AG04449 (cell line): ENCODE measurements at regions of chr6 and their contacts with region 1.

Region 1: DNA sequence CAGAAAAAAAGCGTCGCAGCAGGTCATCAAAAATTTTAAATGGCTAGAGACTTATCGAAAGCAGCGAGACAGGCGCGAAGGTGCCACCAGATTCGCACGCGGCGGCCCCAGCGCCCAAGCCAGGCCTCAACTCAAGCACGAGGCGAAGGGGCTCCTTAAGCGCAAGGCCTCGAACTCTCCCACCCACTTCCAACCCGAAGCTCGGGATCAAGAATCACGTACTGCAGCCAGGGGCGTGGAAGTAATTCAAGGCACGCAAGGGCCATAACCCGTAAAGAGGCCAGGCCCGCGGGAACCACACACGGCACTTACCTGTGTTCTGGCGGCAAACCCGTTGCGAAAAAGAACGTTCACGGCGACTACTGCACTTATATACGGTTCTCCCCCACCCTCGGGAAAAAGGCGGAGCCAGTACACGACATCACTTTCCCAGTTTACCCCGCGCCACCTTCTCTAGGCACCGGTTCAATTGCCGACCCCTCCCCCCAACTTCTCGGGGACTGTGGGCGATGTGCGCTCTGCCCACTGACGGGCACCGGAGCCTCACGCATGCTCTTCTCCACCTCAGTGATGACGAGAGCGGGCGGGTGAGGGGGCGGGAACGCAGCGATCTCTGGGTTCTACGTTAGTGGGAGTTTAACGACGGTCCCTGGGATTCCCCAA is at the start of gene EEF1A1:
- DNase-seq: peak; percentile 99
- H3K4me3 ChIP-seq: peak within 1 kb of the TSS; percentile 100
- CTCF ChIP-seq: peak; percentile 2

Region 2: DNA sequence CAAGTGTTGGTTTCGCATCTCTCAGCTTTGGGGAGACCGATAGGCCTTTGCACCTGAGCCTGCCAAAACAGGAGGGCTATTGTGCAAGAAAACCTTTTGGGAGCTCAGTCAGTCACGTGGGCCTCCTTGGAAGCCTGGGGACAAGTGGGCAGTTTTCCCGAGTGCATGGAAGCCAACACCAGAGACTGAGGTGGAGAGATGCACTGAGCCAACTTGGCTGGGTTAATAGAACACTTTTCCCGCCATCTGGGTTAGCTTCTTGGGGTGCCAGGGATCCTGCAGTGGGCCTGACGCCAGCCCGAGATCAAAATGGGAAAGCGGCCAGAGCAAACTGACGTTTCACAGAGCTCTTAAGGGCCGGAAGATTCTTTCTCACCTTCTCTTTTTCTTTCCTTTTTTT is 148.3 kb before region 1 on chr6:
- CTCF ChIA-PET with region 1: no interaction called
- POLR2A ChIA-PET with region 1: no interaction called
- DNase-seq: no peak
- H3K4me3 ChIP-seq: no peak overlapping the region
- CTCF ChIP-seq: no peak

Region 3: DNA sequence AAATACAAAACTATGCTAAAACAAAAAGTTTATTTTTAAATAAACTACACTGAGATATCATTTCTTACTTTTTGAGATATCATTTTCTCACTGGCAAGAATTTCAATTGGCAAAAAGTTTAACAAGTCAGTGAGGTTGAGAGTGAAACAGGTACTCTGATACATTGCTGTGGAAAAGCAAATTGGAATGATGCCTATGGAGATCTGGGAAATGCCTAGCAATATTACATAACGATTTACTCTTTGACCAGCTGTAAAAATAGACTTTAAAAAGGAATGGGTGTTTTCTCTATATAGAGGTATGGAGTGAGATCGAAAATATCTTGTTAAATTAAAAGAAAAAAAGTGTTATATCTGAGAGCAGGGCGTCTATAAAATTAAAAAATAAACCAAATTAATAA is 85.6 kb before region 1 on chr6:
- CTCF ChIA-PET with region 1: no interaction called
- POLR2A ChIA-PET with region 1: no interaction called
- DNase-seq: no peak
- H3K4me3 ChIP-seq: no peak overlapping the region
- CTCF ChIP-seq: no peak

Region 4: DNA sequence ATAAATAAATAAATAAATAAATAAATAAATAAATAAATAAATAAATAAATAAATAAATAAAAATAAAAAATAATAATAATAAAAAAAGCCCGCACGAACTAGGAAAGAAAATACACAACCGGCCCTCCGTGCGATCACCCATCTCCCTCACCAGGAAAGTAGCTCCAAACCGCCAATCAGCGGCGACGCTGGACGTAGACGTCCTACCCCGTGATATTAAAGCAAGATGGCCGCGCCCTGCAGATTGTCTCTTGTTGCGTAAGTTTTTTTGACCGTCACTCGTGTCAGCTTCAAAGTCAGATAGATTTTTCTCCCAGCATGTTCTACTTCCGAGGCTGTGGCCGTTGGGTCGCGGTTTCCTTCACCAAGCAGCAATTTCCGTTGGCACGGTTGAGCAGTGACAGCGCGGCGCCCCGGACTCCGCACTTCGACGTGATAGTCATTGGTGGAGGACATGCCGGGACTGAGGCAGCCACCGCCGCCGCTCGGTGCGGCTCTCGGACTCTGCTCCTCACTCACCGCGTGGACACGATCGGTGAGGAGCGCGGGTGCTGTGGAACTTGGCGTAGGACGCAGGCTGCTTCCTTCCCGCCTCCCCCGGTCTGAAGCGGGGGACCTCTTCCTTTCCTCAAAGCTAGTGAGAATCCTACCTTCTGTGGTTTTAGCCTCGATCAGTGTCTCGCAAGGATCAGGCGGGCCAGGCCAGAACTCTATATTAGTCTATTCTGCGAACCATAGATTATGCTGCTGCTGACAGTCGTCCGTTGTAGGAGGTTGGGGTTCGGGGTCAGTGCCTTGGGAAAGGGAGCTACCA is 59.1 kb before region 1 on chr6 and contains the start of gene MTO1:
- CTCF ChIA-PET with region 1: no interaction called
- POLR2A ChIA-PET with region 1: interaction called, 10 read pairs
- DNase-seq: peak; percentile 54
- H3K4me3 ChIP-seq: peak within 1 kb of the TSS; percentile 88
- CTCF ChIP-seq: no peak

Region 5: GRCh38 chr6:73580247-73581149 is 59.7 kb after region 1 on chr6:
- CTCF ChIA-PET with region 1: interaction called, 7 read pairs
- POLR2A ChIA-PET with region 1: interaction called, 97 read pairs
- DNase-seq: peak; percentile 92
- H3K4me3 ChIP-seq: peak overlapping the region; percentile 41
- CTCF ChIP-seq: peak; percentile 50

Region 6: DNA sequence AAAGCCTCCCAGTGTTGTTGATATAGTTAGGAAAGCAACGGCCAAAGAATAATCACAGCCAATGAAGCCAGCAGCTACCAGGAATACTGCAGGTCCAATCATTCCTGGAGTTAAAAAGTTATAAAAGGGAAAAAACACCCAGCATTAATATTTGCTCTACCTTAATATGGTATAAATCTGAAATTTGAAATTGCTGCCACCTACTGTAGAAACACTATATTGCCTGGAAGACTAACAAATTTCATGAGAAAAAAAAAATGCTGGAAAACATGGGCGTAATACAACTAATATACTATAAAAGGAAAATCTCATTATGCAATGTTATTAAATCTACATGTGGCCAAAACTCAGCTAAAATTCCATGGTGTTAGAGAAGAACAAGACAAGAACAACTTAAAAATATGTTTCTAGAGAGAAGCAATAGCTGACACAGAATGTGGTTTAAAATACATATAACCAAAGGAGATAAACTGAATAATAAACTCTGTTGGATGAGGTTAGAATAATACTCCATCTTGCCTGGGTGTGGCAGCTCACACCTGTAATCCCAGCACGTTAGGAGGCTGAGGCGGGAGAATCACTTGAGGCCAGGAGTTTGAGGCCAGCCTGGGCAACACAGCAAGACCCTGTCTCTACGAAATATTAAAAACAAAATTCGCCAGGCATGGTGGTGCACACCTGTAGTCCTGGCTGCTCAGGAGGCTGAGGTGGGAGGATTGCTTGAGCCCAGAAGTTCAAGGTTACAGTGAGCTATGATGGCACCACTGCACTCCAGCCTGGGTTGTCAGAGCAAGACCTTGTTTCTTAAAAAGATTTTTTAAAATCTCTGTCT is 89.8 kb after region 1 on chr6:
- CTCF ChIA-PET with region 1: interaction called, 57 read pairs
- POLR2A ChIA-PET with region 1: interaction called, 37 read pairs
- DNase-seq: no peak
- H3K4me3 ChIP-seq: no peak overlapping the region
- CTCF ChIP-seq: peak; percentile 27

Region 7: GRCh38 chr6:73653571-73654424 is 133.0 kb after region 1 on chr6 and contains the start of gene SLC17A5:
- CTCF ChIA-PET with region 1: interaction called, 5 read pairs
- POLR2A ChIA-PET with region 1: interaction called, 27 read pairs
- DNase-seq: peak; percentile 49
- H3K4me3 ChIP-seq: peak within 1 kb of the TSS; percentile 96
- CTCF ChIP-seq: no peak